Endothelial cell of umbilical vein (primary cell): ENCODE measurements at regions of chr10 and their contacts with region 1.

Region 1: DNA sequence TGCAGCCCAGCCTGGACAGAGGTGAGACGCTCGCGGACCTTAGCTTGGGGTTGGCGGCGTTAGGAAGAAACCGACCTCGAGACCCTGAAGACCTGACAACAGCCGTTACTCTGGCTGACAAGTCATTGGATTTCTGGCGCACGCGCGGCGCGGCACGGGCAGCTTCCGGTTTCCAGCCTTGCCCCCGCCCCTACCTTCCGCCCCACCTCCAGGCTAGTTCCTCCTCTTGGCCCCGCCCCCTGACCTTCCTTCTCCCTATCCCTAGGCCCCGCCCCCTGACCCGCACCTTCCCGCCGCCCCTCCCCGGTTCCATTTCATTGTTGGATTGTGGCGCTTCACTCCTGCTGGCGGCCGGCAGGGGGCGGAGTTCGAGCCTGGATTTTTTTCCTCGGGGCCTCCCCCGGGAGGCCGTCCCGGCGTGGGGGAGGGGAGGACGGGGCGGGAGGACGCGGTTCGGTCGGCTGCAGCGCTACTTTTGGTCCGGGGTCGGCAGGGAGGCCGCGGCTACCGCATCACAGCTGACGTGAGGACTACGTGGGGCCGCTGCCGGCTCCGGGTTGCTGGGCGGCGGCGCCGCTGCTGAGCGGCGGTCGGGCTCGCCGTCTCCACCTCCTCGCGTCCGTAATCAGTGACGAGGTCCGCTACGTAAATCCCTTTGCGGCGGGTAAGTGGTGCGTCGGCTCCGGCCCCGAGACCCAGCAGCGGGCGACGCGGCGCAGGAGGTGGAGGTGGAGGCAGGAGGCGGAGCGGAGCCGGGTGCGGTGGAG is at the start of gene CREM:
- DNase-seq: peak; percentile 97
- H3K4me3 ChIP-seq: peak within 1 kb of the TSS; percentile 65 to 85 (median 83)
- H3K27ac ChIP-seq: peak within 1 kb of the TSS; percentile 98
- H3K4me1 ChIP-seq: peaks cover 20% of the 10 kb centered on the region
- H3K27me3 ChIP-seq: no peaks in the 10 kb centered on the region
- CTCF ChIP-seq: peak; percentile 42 to 86
- POLR2A ChIP-seq: peak; percentile 92
- total RNA-seq, gene CREM: 34.8 and 35.5 TPM in 2 replicates

Region 2: GRCh38 chr10:35195361-35196306 is 68.9 kb after region 1 on chr10:
- CTCF ChIA-PET with region 1: interaction called, 141 read pairs
- POLR2A ChIA-PET with region 1: interaction called, 32 read pairs
- dilution Hi-C with region 1: loop called (anchors 25 kb)
- intact Hi-C with region 1: loop called (anchors 1 kb)
- DNase-seq: peak; percentile 99
- H3K4me3 ChIP-seq: peak overlapping the region; percentile 39 to 89 (median 67)
- H3K27ac ChIP-seq: peak overlapping the region; percentile 98
- H3K4me1 ChIP-seq: peaks cover 20% of the 10 kb centered on the region
- H3K27me3 ChIP-seq: no peaks in the 10 kb centered on the region
- CTCF ChIP-seq: peak; percentile 68 to 71
- POLR2A ChIP-seq: no peak

Region 3: DNA sequence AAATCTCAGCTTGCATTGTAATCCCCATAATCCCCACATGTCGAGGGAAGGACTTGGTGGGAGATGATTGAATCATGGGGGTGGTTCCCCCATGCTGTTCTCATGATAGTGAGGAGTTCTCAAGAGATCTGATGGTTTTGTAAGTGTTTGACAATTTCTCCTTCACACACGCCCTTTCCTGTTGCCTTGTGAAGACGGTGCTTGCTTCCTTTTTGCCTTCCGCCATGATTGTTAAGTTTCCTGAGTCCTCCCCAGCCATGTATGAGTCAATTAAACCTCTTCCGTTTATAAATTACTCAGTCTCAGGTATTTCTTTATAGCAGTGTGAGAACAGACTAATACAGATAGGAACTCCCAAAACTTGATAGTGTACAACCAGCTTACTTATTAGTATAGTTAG is 98.5 kb after region 1 on chr10:
- CTCF ChIA-PET with region 1: interaction called, 103 read pairs
- POLR2A ChIA-PET with region 1: interaction called, 4 read pairs
- dilution Hi-C with region 1: loop called (anchors 25 kb)
- intact Hi-C with region 1: loop called (anchors 1 kb)
- DNase-seq: peak; percentile 84
- H3K4me3 ChIP-seq: no peak overlapping the region
- H3K27ac ChIP-seq: peak overlapping the region; percentile 30
- H3K4me1 ChIP-seq: peaks cover 18% of the 10 kb centered on the region
- H3K27me3 ChIP-seq: no peaks in the 10 kb centered on the region
- CTCF ChIP-seq: peak in 1 of 2 donors; percentile 9
- POLR2A ChIP-seq: no peak

Region 4: DNA sequence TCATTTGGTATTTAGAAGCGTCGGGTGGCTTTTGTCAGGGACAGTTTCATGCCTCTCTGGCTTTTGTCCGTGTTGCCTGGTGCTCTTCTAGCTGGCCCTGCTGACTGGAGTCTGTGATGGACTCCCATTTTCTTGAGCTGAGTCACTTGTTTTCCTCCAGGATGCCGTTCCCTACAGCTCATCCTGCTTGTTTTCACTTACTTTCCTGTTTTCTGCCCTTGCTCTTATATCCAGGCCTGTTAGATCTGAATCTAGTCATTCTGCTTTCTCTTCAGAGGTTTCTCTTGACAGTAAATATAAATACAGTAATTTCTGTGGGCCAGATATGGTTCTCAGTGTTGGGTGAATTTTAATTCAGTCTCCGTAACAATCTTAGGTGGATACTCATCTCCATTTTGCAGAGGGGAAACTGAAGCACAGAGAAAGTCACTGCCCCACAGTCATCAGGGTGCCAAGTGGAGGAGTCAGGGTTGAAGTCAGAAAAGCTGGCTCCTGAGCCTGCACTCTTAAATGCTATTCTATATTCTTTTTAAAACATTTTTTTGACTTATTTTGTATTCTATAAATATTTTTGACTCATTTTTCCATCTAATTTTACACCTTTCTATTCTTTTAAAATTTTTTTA is 295.0 kb after region 1 on chr10:
- CTCF ChIA-PET with region 1: no interaction called
- POLR2A ChIA-PET with region 1: no interaction called
- dilution Hi-C with region 1: no loop called
- intact Hi-C with region 1: loop called (anchors 2 kb)
- DNase-seq: peak; percentile 92
- H3K4me3 ChIP-seq: no peak overlapping the region
- H3K27ac ChIP-seq: peak overlapping the region; percentile 96
- H3K4me1 ChIP-seq: peaks cover 73% of the 10 kb centered on the region
- H3K27me3 ChIP-seq: no peaks in the 10 kb centered on the region
- CTCF ChIP-seq: no peak
- POLR2A ChIP-seq: peak; percentile 50

Region 5: GRCh38 chr10:36171953-36172940 is 1045.5 kb after region 1 on chr10:
- CTCF ChIA-PET with region 1: no interaction called
- POLR2A ChIA-PET with region 1: no interaction called
- dilution Hi-C with region 1: no loop called
- intact Hi-C with region 1: loop called (anchors 5 kb)
- DNase-seq: peak; percentile 95
- H3K4me3 ChIP-seq: peak overlapping the region in 1 of 3 experiments; percentile 22
- H3K27ac ChIP-seq: peak overlapping the region; percentile 97
- H3K4me1 ChIP-seq: peaks cover 38% of the 10 kb centered on the region
- H3K27me3 ChIP-seq: no peaks in the 10 kb centered on the region
- CTCF ChIP-seq: no peak
- POLR2A ChIP-seq: no peak